ENCODE measurements at regions of chr4 and their contacts with region 1.

Region 1: GRCh38 chr4:158722917-158723793 is at the start of gene PPID:
- DNase-seq: peak; percentile 88
- H3K4me3 ChIP-seq: peak within 1 kb of the TSS; percentile 97
- H3K27ac ChIP-seq: peak within 1 kb of the TSS; percentile 95
- H3K4me1 ChIP-seq: peaks cover 39% of the 10 kb centered on the region
- H3K27me3 ChIP-seq: no peaks in the 10 kb centered on the region
- CTCF ChIP-seq: no peak
- total RNA-seq, gene PPID: 39.2 TPM

Region 2: DNA sequence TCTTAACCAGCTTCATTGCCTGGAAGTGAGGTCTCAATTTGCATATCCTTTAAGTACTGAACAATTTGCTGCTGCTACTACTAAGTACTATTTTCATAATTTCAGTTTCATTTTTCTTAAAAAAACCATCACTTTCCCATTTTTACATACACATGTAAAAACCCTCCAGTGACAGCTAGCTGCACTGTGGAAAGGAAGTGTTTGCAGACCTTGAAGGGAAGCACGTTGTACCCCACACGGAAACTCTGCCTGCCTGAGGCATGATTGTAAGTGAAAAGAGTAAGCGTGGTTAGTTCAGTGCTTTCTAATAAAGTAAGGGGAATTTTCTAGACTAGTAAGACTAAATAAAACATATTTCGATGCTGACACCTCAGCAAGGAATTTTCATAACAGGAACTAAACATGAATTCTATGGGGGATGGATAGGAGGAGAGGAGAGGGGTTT is 483.3 kb after region 1 on chr4:
- intact Hi-C with region 1: loop called (anchors 10 kb)
- DNase-seq: no peak
- H3K4me3 ChIP-seq: no peak overlapping the region
- H3K27ac ChIP-seq: peak overlapping the region; percentile 84
- H3K4me1 ChIP-seq: peaks cover 94% of the 10 kb centered on the region
- H3K27me3 ChIP-seq: no peaks in the 10 kb centered on the region
- CTCF ChIP-seq: no peak

Measured in left ventricle myocardium inferior (tissue), 1 donor.